Left ventricle myocardium superior (tissue), 1 donor: ENCODE measurements at regions of chr3 and their contacts with region 1.

Region 1: GRCh38 chr3:195106418-195106906 is 164.5 kb downstream of the XXYLT1 start:
- DNase-seq: peak; percentile 87
- ATAC-seq: peak; percentile 76

Region 2: DNA sequence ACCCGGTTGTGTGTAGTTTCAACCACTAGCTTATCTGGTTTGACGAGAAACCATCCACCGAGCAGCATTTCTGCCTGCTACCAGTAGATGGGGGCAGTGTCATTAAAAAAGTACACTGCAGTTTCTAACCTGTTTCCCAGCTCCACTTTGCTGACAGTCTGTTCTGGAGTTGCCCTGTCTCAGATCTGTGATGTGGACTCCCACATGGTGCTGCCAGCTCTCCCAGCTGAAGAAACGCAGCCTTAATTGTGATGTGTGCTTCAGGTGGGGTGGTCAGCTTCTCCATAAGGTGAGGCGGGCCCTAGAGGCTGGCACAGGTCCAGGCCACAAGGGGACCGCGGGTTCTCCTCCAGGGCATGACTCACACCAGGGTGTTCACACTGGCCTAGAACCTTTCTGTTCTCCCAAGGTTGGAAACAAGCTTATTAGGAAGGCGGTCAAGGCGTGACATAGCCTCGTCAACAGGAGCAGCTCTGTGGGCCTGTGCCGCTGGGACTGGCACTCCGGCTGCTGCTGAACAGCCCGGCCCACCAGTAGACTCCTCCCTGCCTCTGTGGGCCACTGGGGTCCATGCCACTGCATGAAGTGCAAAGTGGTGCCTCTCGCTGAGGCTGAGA is 423.7 kb before region 1 on chr3:
- intact Hi-C with region 1: loop called (anchors 5 kb)
- DNase-seq: peak; percentile 60
- ATAC-seq: peak; percentile 49

Region 3: DNA sequence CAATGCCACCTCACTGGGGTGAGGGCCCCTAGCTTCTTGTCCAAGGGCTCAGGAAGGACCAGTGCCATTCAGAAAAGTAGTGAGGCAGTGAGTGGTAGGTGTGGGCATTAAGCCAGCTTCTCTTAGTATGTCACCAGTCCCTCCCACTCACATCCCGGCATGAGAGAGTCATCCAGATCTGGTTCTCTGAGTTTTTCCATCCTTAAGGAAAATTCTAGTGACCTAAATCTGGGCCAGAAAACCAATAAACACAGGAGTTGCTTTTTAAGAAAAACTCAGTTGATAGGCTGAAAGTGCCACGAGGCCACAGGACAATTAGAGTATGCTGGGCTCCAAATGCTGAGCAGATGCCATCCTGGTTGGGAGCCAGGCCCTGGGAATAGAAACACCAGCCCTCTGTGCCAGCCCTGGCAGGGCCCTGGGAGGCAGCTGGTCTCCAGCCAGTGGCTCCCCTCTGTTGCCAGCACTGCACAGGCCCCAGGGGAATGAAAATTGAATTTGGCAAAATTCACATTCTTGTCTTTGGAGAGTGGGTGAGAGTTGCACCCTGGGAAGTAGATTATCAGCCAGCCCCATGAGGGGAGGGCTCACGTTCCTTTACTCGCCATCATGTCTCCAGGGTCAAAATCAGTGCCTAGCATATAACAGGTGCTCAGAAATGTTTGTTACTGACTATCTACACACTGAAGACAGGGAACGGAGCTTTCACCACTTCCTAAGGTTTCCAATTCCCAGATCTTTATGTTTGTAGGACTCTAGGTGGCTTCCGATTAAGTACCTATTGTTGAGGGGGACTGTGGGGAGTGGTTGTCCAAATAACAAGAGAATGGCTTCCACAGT is 368.0 kb before region 1 on chr3:
- intact Hi-C with region 1: no loop called
- DNase-seq: peak; percentile 88
- ATAC-seq: peak; percentile 99

Region 4: GRCh38 chr3:195001961-195002861 is 104.3 kb before region 1 on chr3:
- intact Hi-C with region 1: loop called (anchors 5 kb)
- DNase-seq: peak; percentile 80
- ATAC-seq: peak; percentile 64